ENCODE measurements at regions of chr21 and their contacts with region 1.

Region 1: GRCh38 chr21:33348706-33349105 is 23.9 kb downstream of the IFNAR1 start:
- DNase-seq: no peak
- H3K4me3 ChIP-seq: no peak overlapping the region
- H3K27ac ChIP-seq: no peak overlapping the region
- H3K4me1 ChIP-seq: no peaks in the 10 kb centered on the region
- H3K27me3 ChIP-seq: no peaks in the 10 kb centered on the region

Region 2: GRCh38 chr21:33332143-33332542 is 16.6 kb before region 1 on chr21:
- CTCF ChIA-PET with region 1: interaction called, 10 read pairs
- POLR2A ChIA-PET with region 1: no interaction called
- DNase-seq: peak in 1 of 3 donors; percentile 38
- H3K4me3 ChIP-seq: no peak overlapping the region
- H3K27ac ChIP-seq: no peak overlapping the region
- H3K4me1 ChIP-seq: peaks cover 0 to 5% (median 0%) of the 10 kb centered on the region in 4 experiments
- H3K27me3 ChIP-seq: no peaks in the 10 kb centered on the region